Activated T-helper 1 cell treated with anti-CD3 and anti-CD28 coated beads, Interleukin-12 subunit alpha, Interleukin-12 subunit beta, Interleukin-2, Interleukin-4 antibody, amounts not matched to agents 30 ng/mL and 10 ng/mL and 1 ng/mL, durations not matched to agents 14 hours and 24 hours and 36 hours (primary cell): ENCODE measurements at regions of chr3 and their contacts with region 1.

Region 1: DNA sequence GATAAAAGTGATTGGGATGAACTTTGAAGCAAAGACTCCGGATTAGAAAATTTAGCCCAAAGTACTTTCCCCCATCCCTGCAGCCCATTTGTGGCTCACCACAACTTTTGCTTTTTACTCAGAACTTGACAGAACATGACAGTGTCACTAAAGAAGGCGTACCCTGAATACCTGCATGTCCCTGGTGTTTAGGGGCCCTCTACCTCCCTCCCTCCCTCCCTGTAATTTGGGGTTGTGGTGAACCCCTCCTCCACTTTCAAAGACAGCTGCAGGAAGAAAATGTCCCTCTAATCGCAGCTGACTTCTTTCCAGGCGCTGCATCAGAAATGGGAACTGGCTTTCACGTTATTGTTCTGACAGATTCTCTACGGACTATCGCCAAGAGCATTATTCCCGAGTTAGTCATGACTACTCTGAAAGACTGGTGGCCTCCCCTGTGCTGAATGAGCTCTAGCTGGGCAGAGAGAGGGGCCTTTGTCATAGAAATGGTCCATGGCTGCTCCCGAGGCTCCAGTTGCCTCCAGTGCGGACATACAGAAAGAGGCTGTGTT is 93.2 kb upstream of the ARHGEF3 start:
- DNase-seq: no peak
- H3K4me3 Mint-ChIP-seq: no peak overlapping the region
- H3K27ac Mint-ChIP-seq: no peak overlapping the region
- H3K4me1 Mint-ChIP-seq: peaks cover 46% of the 10 kb centered on the region
- H3K27me3 Mint-ChIP-seq: peaks cover 9% of the 10 kb centered on the region

Region 2: DNA sequence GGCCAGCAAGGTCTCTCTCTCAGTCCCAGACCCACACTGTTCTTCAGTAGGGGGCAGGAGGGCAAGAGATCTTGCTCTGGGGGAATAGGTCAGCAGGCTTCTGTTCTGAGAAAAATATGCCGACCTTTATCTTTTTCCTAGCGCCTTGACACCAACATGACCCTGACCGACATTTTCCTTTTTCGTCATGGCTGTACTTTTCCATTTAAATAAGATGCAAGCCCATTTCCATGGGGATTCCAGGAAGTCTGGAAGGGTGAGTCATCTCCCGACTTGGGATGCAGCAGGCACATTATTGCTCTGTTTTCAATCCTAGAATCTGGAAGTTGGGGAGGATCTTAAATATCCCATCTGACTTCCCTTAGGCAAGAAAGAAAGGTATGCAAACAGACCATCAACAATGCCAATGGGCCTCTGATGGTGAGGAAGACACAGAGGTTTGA is 1705.6 kb before region 1 on chr3:
- intact Hi-C with region 1: no loop called
- DNase-seq: no peak
- H3K4me3 Mint-ChIP-seq: no peak overlapping the region
- H3K27ac Mint-ChIP-seq: no peak overlapping the region
- H3K4me1 Mint-ChIP-seq: no peaks in the 10 kb centered on the region
- H3K27me3 Mint-ChIP-seq: no peaks in the 10 kb centered on the region

Region 3: GRCh38 chr3:56878074-56878473 is 16.9 kb before region 1 on chr3:
- intact Hi-C with region 1: loop called (anchors 2 kb)
- DNase-seq: peak; percentile 14
- H3K4me3 Mint-ChIP-seq: peak overlapping the region; percentile 72
- H3K27ac Mint-ChIP-seq: peak overlapping the region; percentile 92
- H3K4me1 Mint-ChIP-seq: peaks cover 76% of the 10 kb centered on the region
- H3K27me3 Mint-ChIP-seq: no peaks in the 10 kb centered on the region